ENCODE measurements at regions of chr19 and their contacts with region 1.

Region 1: DNA sequence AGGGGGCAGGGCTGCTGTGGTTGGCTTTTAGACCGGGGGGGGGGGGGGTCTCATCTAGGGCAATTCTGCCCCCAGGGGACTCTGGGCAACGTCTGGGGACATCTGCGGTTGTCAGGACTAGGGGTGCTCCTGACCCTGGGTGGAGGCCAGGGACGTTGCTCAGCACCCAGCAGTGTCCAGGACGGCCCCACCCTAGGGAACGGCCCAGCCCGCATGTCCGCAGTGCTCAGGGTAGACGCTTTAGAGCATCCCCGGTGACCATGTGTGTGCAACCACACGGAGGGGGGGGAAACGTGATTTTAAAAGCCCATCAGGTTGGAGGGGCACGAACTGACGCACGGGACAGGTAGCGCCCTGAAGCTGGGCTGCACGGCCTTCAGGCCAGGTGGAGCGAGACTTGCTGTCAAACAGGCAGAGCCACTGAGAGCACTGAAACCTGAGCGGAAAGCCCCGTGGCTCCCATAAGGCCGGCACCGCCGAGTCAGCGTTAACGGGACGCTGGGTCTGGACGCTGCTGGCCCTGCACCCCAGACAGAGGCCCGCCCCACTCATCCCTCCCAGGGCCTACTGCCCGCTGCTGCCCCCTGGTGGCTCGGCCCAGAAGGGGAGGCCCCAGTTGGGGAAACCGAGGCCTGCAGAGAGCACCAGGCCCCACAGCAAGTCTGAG is 8.3 kb downstream of the CACTIN start:
- DNase-seq: peak; percentile 19 to 74 (median 54)
- ATAC-seq: peak; percentile 61 to 64
- H3K4me3 Mint-ChIP-seq: peak overlapping the region in 1 of 10 donors; percentile 45
- H3K27ac Mint-ChIP-seq: peak overlapping the region in 1 of 10 donors; percentile 13
- H3K4me1 Mint-ChIP-seq: peaks cover 7 to 20% (median 16%) of the 10 kb centered on the region in 4 donors
- H3K27me3 Mint-ChIP-seq: no peaks in the 10 kb centered on the region

Region 2: GRCh38 chr19:3538965-3539742 is 79.1 kb before region 1 on chr19 and contains the start of gene TEKTIP1:
- POLR2A ChIA-PET with region 1: no interaction called
- DNase-seq: no peak
- ATAC-seq: no peak
- H3K4me3 Mint-ChIP-seq: no peak within 1 kb of the TSS
- H3K27ac Mint-ChIP-seq: peak within 1 kb of the TSS in 2 of 10 donors; percentile 37 to 40
- H3K4me1 Mint-ChIP-seq: peaks cover 0 to 2% (median 0%) of the 10 kb centered on the region in 4 donors
- H3K27me3 Mint-ChIP-seq: no peaks in the 10 kb centered on the region
- polyA plus RNA-seq, gene TEKTIP1: 0.45 TPM in 1 of 3 donors, not detected in the others

Region 3: GRCh38 chr19:3586124-3586626 is 32.1 kb before region 1 on chr19:
- POLR2A ChIA-PET with region 1: interaction called, 39 read pairs
- DNase-seq: peak; percentile 26 to 79 (median 56)
- ATAC-seq: peak; percentile 60 to 72
- H3K4me3 Mint-ChIP-seq: peak overlapping the region; percentile 56 to 79 (median 66)
- H3K27ac Mint-ChIP-seq: peak overlapping the region in 2 of 10 donors; percentile 19 to 43
- H3K4me1 Mint-ChIP-seq: peaks cover 0 to 3% (median 0%) of the 10 kb centered on the region in 4 donors
- H3K27me3 Mint-ChIP-seq: no peaks in the 10 kb centered on the region

Region 4: DNA sequence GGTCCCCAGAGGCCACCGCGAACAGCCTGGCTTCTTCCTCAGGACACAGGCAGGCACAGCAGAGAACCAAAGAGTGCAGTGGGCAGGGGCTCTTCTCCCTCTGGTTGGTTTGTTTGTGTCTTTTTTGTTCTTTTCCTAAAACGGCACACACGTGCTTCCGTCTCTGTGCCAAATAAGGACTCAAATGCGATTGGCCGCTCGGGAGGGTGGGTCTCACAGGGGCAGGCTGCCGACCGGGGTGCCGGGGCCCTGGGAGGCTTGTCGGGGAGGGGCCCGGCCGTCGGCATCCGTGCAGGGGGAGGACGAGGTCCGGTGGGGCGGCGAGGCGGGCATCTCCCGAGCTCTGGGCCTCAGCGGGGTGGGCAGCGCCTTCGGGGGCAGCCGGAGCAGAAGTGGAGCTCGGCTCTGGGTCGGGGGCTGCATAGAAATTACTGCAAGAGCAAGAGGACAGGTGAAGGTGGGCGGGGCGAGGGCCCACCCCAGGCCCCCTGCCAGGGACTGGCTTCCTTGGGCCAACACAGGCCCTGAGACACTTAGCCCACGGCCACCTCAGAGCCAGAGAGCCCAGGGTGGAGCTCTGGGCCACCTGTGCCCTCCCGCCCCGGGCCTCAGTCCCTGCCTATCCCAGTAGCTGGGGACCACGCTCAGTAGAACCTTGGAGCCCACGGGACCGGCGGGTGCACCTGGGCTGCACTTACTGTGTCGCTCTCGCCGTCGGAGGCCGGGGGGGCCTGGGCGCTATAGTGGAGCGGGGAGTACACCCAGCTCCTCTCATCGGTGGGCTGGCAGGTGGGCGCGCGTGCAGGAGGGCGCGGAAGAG is 14.7 kb after region 1 on chr19:
- POLR2A ChIA-PET with region 1: no interaction called
- DNase-seq: no peak
- ATAC-seq: no peak
- H3K4me3 Mint-ChIP-seq: no peak overlapping the region
- H3K27ac Mint-ChIP-seq: peak overlapping the region in 1 of 10 donors; percentile 11
- H3K4me1 Mint-ChIP-seq: peaks cover 0 to 4% (median 0%) of the 10 kb centered on the region in 4 donors
- H3K27me3 Mint-ChIP-seq: no peaks in the 10 kb centered on the region